Esophagus squamous epithelium (tissue), 5 donors: ENCODE measurements at regions of chr6 and their contacts with region 1.

Region 1: GRCh38 chr6:28940858-28941680 is 17.3 kb upstream of the TRIM27 start:
- DNase-seq: no peak
- H3K4me3 ChIP-seq: peak overlapping the region; percentile 46 to 78 (median 70)
- H3K27ac ChIP-seq: peak overlapping the region; percentile 77 to 89 (median 88)
- H3K4me1 ChIP-seq: peaks cover 11 to 52% (median 14%) of the 10 kb centered on the region in 3 donors
- H3K27me3 ChIP-seq: no peaks in the 10 kb centered on the region
- CTCF ChIP-seq: no peak
- POLR2A ChIP-seq: no peak

Region 2: DNA sequence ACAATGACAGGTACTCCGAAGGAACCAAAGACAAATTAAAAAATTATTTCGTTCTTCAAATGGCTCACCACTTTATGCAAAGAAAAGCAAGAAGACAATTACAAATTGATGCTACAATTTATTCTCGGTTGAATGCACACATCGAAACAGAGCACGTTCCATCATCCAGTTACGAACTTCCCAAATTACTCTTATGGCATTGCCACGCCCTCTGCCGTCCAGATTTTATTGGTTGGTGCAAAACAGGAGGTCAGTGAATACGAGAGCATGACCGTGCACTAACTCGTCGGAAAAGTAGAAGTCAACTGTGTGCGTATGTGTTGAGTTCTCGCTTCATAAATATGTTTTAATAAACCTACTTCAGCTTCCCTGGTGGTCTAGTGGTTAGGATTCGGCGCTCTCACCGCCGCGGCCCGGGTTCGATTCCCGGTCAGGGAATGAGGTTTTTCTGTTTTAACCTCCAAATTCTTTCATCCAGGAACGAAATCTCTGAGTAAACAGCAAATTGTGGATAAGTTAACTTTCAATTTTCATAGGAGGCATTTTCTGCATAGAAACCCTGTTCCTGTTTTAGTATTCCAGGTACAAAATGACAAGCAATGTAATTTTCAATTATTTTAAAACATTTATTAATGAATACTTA is 40.9 kb after region 1 on chr6:
- intact Hi-C with region 1: loop called (anchors 5 kb)
- DNase-seq: no peak
- H3K4me3 ChIP-seq: peak overlapping the region; percentile 38 to 78 (median 68)
- H3K27ac ChIP-seq: peak overlapping the region; percentile 53 to 87 (median 85)
- H3K4me1 ChIP-seq: peaks cover 7 to 60% (median 9%) of the 10 kb centered on the region in 3 donors
- H3K27me3 ChIP-seq: peaks cover 0 to 14% (median 0%) of the 10 kb centered on the region in 4 donors
- CTCF ChIP-seq: peak in 3 of 6 experiments; percentile 17 to 19 (median 19)
- POLR2A ChIP-seq: no peak